ENCODE measurements at regions of chr5 and their contacts with region 1.

Region 1: GRCh38 chr5:102545175-102545574 is 46.4 kb upstream of the SLCO6A1 start:
- DNase-seq: peak; percentile 43 to 63
- H3K4me3 ChIP-seq: no peak overlapping the region
- H3K27ac ChIP-seq: no peak overlapping the region
- H3K4me1 ChIP-seq: no peaks in the 10 kb centered on the region
- H3K27me3 ChIP-seq: no peaks in the 10 kb centered on the region
- CTCF ChIP-seq: peak; percentile 74 to 94 (median 91)
- EP300 ChIP-seq: no peak
- POLR2A ChIP-seq: no peak
- RAD21 ChIP-seq: peak; percentile 73 to 80

Region 2: DNA sequence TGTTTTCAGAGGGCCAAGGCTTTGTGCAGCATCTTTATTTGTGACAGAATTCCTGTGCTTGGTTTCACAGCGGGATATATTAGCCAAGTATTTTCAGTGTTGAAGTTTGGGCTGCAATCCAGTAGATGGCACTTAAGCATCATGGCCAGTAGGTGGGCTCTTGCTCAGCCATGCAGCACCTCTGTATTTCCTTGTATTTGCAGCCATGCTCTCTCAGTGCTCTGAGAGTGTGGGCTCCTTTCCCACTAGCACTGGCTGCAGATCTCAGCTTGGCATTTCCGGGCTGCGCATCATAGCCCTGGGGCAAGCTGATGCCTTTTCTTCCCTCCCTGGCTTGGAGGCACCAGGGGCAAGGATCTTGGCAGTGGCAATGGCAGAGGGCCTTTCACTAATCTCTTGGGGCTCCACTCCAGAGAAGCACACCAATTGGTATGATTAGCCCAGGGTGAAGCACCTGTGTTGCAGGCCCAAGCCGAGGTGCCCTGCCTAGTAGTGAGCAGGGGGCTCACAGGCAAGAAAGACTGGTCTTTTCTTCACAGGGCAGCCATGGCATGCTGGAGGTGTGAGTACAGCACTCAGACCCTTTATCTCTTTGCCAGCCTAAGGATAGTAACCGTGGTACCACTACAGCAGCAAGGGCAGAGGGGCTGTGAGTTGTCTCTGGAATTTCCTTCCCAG is 94.7 kb before region 1 on chr5:
- CTCF ChIA-PET with region 1: interaction called, 10 read pairs
- POLR2A ChIA-PET with region 1: no interaction called
- DNase-seq: peak; percentile 9 to 47
- H3K4me3 ChIP-seq: no peak overlapping the region
- H3K27ac ChIP-seq: no peak overlapping the region
- H3K4me1 ChIP-seq: peaks cover 0 to 2% (median 0%) of the 10 kb centered on the region in 4 experiments; a peak in 1 of 7 replicates
- H3K27me3 ChIP-seq: no peaks in the 10 kb centered on the region
- CTCF ChIP-seq: peak; percentile 48 to 79 (median 72)
- EP300 ChIP-seq: no peak
- POLR2A ChIP-seq: no peak
- RAD21 ChIP-seq: peak; percentile 85 to 88

Region 3: GRCh38 chr5:102561894-102562760 is 17.0 kb after region 1 on chr5:
- CTCF ChIA-PET with region 1: interaction called, 20 read pairs
- POLR2A ChIA-PET with region 1: interaction called, 3 read pairs
- DNase-seq: peak; percentile 38 to 82
- H3K4me3 ChIP-seq: no peak overlapping the region
- H3K27ac ChIP-seq: no peak overlapping the region
- H3K4me1 ChIP-seq: no peaks in the 10 kb centered on the region
- H3K27me3 ChIP-seq: no peaks in the 10 kb centered on the region
- CTCF ChIP-seq: peak; percentile 61 to 91 (median 87)
- EP300 ChIP-seq: no peak
- POLR2A ChIP-seq: no peak
- RAD21 ChIP-seq: peak; percentile 83 to 88